A549 (cell line): ENCODE measurements at regions of chr17 and their contacts with region 1.

Region 1: DNA sequence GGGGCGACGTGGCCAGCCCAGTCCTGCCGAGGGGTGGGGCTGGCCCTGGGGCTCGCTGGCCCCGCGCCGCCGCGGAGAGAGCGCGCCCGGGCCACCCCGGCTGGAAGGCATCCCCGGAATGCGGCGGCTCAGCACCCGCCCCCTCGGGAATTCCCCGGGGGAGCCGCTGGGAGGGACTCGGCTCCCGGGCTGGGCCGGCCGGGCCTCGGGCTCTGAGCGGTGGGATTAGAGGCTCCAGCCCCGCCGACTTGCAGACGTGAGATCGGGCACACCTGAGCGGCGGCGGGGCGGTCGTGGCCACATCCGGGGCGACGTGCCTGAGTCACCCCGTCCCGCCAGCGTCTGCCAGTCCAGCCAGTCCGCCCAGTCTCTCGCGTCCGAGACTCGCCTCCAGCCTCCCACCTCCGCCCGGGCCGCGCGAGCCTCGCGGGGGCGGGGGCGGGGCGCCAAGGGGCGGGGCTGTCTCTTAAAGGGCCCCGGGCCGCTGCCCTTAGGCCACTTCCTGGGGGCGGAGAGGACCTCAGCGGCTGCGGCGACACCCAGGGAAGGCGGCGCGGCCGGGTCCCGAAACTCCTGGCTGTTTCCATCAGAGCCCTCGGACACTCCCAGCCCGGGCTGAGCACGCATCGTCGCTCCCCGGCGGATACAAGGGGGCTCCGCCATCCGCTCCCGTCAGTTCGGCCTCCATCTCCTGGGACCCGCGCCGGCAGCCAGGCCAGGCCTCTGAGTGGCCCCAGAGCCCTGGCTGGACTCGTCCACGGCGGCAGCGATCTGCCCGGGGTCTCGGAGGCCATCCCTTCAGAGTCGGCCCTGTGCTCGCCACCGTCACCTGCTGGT is at the start of gene KCTD11:
- DNase-seq: peak; percentile 91 to 96
- ATAC-seq: peak; percentile 57 to 79
- H3K4me3 ChIP-seq: peak within 1 kb of the TSS; percentile 70
- H3K27ac ChIP-seq: peak within 1 kb of the TSS; percentile 92 to 96
- H3K4me1 ChIP-seq: peaks cover 52% of the 10 kb centered on the region
- CTCF ChIP-seq: peak; percentile 60
- EP300 ChIP-seq: peak in 1 of 2 experiments; percentile 39; a peak in 1 of 5 replicates
- POLR2A ChIP-seq: peak; percentile 69
- RAD21 ChIP-seq: no peak
- polyA plus RNA-seq, gene KCTD11: 6.1 and 7.0 TPM in 2 replicates

Region 2: GRCh38 chr17:7280519-7281429 is 71.1 kb before region 1 on chr17:
- CTCF ChIA-PET with region 1: interaction called, 118 read pairs
- POLR2A ChIA-PET with region 1: no interaction called
- DNase-seq: peak; percentile 90 to 96
- ATAC-seq: peak; percentile 80 to 88
- H3K4me3 ChIP-seq: peak overlapping the region; percentile 46
- H3K27ac ChIP-seq: peak overlapping the region; percentile 47 to 74
- H3K4me1 ChIP-seq: peaks cover 11% of the 10 kb centered on the region
- CTCF ChIP-seq: peak; percentile 97
- EP300 ChIP-seq: no peak
- POLR2A ChIP-seq: no peak
- RAD21 ChIP-seq: peak; percentile 99 to 100

Region 3: GRCh38 chr17:7329374-7329996 is 22.4 kb before region 1 on chr17:
- CTCF ChIA-PET with region 1: interaction called, 433 read pairs
- POLR2A ChIA-PET with region 1: interaction called, 12 read pairs
- DNase-seq: peak; percentile 99 to 100
- ATAC-seq: peak; percentile 62 to 82
- H3K4me3 ChIP-seq: peak overlapping the region; percentile 81
- H3K27ac ChIP-seq: peak overlapping the region; percentile 89 to 98
- H3K4me1 ChIP-seq: peaks cover 15% of the 10 kb centered on the region; the same call in 2 of the 3 replicates
- CTCF ChIP-seq: no peak
- EP300 ChIP-seq: no peak
- POLR2A ChIP-seq: peak; percentile 87
- RAD21 ChIP-seq: no peak

Region 4: DNA sequence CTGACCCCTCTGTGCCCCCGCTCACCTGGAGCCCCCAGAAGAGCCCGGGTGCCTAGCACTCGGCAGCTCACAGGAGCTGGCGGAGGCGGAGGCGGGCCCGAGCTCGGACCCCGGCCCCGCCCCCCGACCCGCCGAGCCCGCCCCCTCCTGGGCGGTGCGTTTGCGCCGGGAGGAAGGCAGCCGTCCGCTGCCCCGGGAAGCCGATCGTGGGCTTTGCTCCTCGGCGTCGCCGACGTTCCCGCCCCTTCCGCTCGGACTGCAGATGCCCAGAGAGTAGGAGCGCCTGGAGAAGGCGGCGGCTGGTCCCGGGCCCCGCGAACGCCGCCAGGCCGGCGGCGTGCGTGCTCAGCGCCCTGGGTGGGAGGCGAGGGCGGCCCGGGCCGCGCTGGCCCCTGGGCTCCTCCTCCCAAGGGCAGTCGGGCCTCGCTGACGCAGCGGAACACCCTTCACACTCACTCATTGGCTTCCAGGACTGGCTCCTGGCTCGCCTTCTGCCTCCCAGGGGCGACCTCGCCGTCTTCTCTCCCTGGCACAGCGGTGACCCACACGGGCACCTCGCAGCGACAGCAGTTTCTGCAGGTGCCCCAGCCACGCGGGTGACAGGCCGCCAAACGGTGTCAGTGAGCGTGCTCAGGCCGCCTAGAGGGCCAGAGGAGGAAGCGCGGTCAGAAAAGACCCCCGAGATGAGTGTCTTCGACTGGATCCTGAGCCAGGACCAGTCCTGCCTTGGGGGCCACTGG is 42.7 kb after region 1 on chr17 and contains the start of gene PLSCR3:
- CTCF ChIA-PET with region 1: interaction called, 139 read pairs
- POLR2A ChIA-PET with region 1: interaction called, 4 read pairs
- DNase-seq: peak; percentile 83 to 91
- ATAC-seq: peak; percentile 90 to 91
- H3K4me3 ChIP-seq: peak within 1 kb of the TSS; percentile 71
- H3K27ac ChIP-seq: peak within 1 kb of the TSS; percentile 83 to 92
- H3K4me1 ChIP-seq: peaks cover 10% of the 10 kb centered on the region; the same call in 1 of the 3 replicates
- CTCF ChIP-seq: peak; percentile 28
- EP300 ChIP-seq: no peak
- POLR2A ChIP-seq: peak; percentile 93
- RAD21 ChIP-seq: no peak; a peak in 1 of 5 replicates
- polyA plus RNA-seq, gene PLSCR3: 11.0 and 13.7 TPM in 2 replicates

Region 5: DNA sequence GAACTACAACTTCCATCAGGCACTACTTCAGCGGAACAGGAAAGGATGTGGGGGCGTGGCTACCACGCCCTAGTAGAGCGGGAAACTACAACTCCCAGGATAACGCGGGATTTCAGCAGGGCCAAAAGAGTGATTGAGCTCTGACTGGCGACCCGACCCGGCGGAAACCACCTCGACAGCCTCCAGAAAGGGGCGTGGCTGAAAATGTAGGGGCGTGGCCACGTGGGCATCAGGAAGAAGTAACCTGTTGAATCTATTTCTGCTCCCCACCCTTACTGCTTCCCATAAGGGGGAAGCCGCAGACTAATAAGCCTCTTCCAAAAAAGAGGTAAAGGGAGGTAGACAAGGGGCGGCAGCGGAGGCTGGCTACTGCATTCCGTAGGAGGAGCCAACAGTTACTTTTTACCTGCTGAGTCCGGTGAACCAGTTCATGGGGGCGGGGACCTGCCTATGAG is 83.4 kb after region 1 on chr17 and contains the start of gene TMEM102:
- CTCF ChIA-PET with region 1: interaction called, 232 read pairs
- POLR2A ChIA-PET with region 1: interaction called, 10 read pairs
- DNase-seq: peak; percentile 99
- ATAC-seq: peak; percentile 75 to 87
- H3K4me3 ChIP-seq: peak within 1 kb of the TSS; percentile 55
- H3K27ac ChIP-seq: peak within 1 kb of the TSS; percentile 62 to 85
- H3K4me1 ChIP-seq: peaks cover 23% of the 10 kb centered on the region
- CTCF ChIP-seq: no peak
- EP300 ChIP-seq: no peak
- POLR2A ChIP-seq: peak; percentile 16
- RAD21 ChIP-seq: no peak
- polyA plus RNA-seq, gene TMEM102: 4.4 and 4.9 TPM in 2 replicates

Region 6: DNA sequence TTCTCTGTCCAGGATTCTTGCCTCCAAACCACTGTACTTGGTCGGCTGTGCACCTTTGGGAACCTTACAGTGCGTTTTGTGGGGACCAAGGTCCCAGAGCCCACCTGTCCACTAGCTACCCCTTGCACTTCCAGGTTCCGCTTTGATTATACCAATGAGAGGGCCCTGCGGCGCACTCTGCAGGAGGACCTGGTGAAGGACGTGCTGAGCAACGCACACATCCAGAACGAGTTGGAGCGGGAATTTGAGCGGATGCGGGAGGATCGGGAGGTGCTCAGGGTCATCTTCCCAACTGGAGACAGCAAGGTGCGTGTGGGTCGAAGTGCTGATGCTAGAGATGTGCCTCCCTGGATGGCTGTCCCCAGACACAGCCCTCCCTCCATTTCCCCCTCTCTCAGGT is 151.1 kb after region 1 on chr17:
- CTCF ChIA-PET with region 1: interaction called, 13 read pairs
- POLR2A ChIA-PET with region 1: no interaction called
- DNase-seq: peak in 1 of 2 experiments; percentile 37
- ATAC-seq: peak; percentile 62 to 72
- H3K4me3 ChIP-seq: no peak overlapping the region
- H3K27ac ChIP-seq: no peak overlapping the region
- H3K4me1 ChIP-seq: no peaks in the 10 kb centered on the region
- CTCF ChIP-seq: peak; percentile 31; the same call in 2 of the 3 replicates
- EP300 ChIP-seq: no peak
- POLR2A ChIP-seq: no peak
- RAD21 ChIP-seq: peak; percentile 34 to 54; a peak in 4 of 5 replicates